Activated B cell treated with CpG ODN at 0.5 μM for 24 hours (primary cell): ENCODE measurements at regions of chr19 and their contacts with region 1.

Region 1: DNA sequence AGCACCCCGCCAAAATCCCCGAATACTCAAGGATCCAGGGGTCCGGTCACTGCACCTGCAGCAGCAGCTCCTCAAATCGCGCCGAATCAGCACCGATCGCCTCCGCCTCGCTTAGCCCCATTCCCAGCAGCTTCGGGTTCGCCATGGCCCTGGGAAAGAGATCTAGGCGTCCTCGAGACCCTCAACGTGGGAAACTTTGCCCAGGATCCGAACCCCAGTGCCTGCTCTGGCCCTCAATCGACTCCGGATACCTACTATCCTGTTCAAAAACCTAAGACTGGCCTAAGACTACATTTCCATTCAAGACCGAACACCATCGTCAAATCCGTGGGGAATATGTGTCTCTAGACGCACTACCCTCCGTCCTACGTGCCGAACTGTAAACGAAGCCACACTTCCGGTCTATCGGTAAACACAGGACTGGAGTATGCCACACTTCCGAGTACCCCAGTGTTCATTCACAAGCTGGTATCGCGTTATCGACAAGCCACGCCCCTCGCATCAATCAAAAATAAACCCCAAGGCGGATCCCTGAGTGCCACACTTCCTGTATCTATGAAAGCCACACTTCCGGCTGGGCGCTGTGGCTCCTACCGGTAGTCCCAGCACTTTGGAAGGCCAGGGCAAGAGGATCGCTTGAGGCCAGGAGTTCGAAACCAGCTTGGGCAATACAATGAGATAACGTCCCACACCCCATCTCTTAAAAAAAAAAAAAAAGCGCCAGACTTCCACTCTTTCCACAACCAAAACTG is at the start of gene PIH1D1:
- DNase-seq: peak; percentile 79
- ATAC-seq: peak; percentile 60
- H3K4me3 Mint-ChIP-seq: peak within 1 kb of the TSS; percentile 99
- H3K27ac Mint-ChIP-seq: peak within 1 kb of the TSS; percentile 100
- H3K4me1 Mint-ChIP-seq: peaks cover 55% of the 10 kb centered on the region
- H3K27me3 Mint-ChIP-seq: no peaks in the 10 kb centered on the region
- CTCF ChIP-seq: no peak
- total RNA-seq, gene PIH1D1: 110 and 111 TPM in 2 replicates

Region 2: DNA sequence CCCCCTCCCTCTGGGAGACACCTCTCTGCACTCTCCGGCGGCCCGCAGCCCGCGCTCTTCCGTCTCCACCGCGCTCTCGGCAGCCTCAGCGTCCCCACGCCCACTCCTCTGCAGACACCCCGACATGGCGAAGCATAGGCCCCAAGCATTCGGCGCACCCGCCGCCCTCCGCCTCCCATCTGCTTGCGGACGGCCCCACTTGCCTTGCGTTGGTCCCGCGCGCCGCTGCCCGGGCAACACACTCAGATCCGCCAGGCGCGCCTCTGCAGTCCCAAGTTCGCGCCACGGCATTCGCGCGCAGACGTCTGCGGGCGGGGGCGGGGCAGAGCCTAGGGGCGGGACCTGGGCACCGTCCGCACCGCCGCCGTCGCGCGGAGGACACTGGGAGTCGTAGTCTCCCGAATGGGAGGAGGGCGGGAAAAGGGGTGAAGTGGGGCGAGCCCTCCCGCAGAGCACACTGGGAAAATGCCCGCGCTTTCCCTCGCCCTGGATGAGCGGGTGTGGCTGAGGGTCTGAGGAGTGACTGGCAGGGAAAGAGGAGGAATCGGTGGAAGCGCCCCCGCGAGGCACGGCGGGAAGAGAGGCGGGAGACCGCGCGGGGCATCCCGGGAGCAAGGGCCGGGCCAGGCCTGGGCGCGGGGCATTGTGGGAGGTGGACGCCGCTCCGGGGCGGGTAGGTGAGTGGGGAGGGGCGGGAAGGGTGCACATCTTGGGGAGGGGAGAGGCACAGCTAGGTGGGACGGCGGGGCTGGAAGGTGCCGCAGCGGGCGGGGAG is 1281.4 kb before region 1 on chr19 and contains the starts of genes LIG1 and ZSWIM9:
- CTCF ChIA-PET with region 1: no interaction called
- POLR2A ChIA-PET with region 1: interaction called, 10 read pairs
- intact Hi-C with region 1: no loop called
- DNase-seq: peak; percentile 93
- ATAC-seq: peak; percentile 83
- H3K4me3 Mint-ChIP-seq: peak within 1 kb of the TSS; percentile 100
- H3K27ac Mint-ChIP-seq: peak within 1 kb of the TSS; percentile 99
- H3K4me1 Mint-ChIP-seq: peaks cover 21% of the 10 kb centered on the region
- H3K27me3 Mint-ChIP-seq: no peaks in the 10 kb centered on the region
- CTCF ChIP-seq: no peak
- total RNA-seq, gene LIG1: 41.8 and 42.9 TPM in 2 replicates
- total RNA-seq, gene ZSWIM9: 5.7 and 8.6 TPM in 2 replicates

Region 3: GRCh38 chr19:48993175-48994034 is 458.2 kb before region 1 on chr19 and contains the starts of genes GYS1 and RUVBL2:
- CTCF ChIA-PET with region 1: no interaction called
- POLR2A ChIA-PET with region 1: interaction called, 8 read pairs
- intact Hi-C with region 1: loop called (anchors 1 kb)
- DNase-seq: peak; percentile 96
- ATAC-seq: peak; percentile 92
- H3K4me3 Mint-ChIP-seq: peak within 1 kb of the TSS; percentile 97
- H3K27ac Mint-ChIP-seq: peak within 1 kb of the TSS; percentile 97
- H3K4me1 Mint-ChIP-seq: peaks cover 33% of the 10 kb centered on the region
- H3K27me3 Mint-ChIP-seq: no peaks in the 10 kb centered on the region
- CTCF ChIP-seq: peak; percentile 94
- total RNA-seq, gene GYS1: 50.7 and 52.7 TPM in 2 replicates
- total RNA-seq, gene RUVBL2: 75.6 and 79.4 TPM in 2 replicates

Region 4: GRCh38 chr19:49282184-49282583 is 169.4 kb before region 1 on chr19:
- CTCF ChIA-PET with region 1: no interaction called
- POLR2A ChIA-PET with region 1: no interaction called
- intact Hi-C with region 1: no loop called
- DNase-seq: no peak
- ATAC-seq: no peak
- H3K4me3 Mint-ChIP-seq: no peak overlapping the region
- H3K27ac Mint-ChIP-seq: no peak overlapping the region
- H3K4me1 Mint-ChIP-seq: no peaks in the 10 kb centered on the region
- H3K27me3 Mint-ChIP-seq: peaks cover 10% of the 10 kb centered on the region
- CTCF ChIP-seq: no peak

Region 5: DNA sequence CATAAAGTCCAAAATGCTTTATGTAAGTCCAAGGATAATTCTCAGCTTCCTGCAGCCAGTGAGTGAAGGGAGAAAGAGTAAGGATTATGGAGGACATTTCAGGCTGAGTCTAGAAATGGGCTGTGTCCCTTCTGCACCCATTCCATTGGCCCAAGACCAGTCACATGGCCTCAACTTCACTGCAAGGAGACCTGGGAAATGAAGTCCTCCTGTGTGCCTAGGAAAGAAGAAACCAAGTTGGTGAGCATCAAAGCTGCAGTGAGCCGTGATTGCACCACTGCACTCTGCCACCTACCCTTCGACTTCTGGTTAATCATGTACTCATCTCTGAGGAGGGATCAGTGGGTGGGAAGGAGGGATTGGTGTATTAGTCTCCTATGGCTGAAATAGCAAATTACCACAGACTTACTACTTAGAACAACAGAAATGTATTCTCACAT is 120.0 kb before region 1 on chr19:
- CTCF ChIA-PET with region 1: no interaction called
- POLR2A ChIA-PET with region 1: interaction called, 20 read pairs
- intact Hi-C with region 1: loop called (anchors 5 kb)
- DNase-seq: no peak
- ATAC-seq: peak; percentile 44
- H3K4me3 Mint-ChIP-seq: peak overlapping the region; percentile 73
- H3K27ac Mint-ChIP-seq: peak overlapping the region; percentile 100
- H3K4me1 Mint-ChIP-seq: peaks cover 95% of the 10 kb centered on the region
- H3K27me3 Mint-ChIP-seq: no peaks in the 10 kb centered on the region
- CTCF ChIP-seq: no peak

Region 6: DNA sequence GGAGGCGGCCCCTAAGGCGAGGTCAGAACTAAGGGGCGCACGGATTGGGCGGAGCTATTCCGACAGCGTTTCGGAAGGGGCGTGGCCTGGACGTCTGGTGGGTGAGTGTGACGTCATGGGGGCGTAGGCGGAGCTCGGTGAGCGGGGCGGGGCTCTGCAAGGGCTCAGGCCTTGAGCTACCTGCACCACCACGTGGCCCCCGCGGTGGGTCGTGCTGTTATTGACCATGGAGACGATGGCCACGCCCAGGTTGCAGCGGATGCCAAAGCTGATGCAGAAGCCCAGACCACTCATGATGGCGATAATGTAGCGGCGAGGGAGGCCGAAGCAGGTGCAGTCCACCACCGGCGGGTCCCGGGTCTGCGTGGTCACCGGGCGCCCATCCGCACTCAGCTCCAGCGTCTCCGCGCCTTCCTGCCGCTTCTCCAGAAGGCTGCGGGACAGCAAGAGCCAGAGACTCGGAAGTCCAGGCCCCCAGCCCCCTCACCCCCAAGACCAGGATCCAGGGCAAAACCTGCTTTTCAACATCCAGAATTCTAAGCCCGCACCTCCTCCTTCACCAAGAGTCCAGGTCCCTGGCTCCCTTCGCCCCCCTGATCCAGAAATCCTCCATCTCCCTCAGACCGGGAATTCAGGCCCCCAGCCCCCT is 15.1 kb before region 1 on chr19:
- CTCF ChIA-PET with region 1: no interaction called
- POLR2A ChIA-PET with region 1: no interaction called
- intact Hi-C with region 1: no loop called
- DNase-seq: no peak
- ATAC-seq: peak; percentile 50
- H3K4me3 Mint-ChIP-seq: peak overlapping the region; percentile 7
- H3K27ac Mint-ChIP-seq: no peak overlapping the region
- H3K4me1 Mint-ChIP-seq: peaks cover 38% of the 10 kb centered on the region
- H3K27me3 Mint-ChIP-seq: peaks cover 82% of the 10 kb centered on the region
- CTCF ChIP-seq: no peak

Region 7: DNA sequence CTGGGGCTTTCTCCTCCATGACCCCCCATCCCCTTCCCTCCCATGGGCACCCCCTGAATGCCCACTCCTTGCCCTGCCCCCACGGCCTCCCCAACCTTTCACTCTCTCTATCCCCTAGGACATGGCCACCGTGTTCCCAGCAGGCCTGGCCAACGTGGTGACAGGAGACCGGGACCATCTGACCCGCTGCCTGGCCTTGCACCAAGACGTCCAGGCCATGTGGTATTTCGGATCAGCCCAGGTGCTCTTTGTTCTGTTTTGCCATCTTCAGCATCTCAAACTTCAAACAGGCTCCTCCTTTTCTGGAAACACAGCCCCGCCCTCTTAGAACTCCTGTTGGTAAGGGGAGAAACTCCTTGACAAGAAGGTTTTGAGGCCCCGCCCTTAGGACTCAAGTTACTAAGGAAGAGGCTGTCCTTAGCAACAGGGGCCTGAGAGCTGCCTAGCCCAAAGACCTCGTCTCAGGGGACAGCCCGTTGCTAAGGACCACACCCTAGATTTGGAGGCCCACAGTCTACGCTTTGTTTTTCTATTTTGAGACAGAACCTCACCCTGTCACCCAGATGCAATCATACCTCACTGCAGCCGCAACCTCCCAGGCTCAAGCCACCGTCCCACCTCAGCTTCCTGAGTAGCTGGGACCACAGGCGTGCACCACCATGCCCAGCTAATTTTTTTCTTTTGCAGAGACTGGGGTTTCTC is 17.3 kb after region 1 on chr19:
- CTCF ChIA-PET with region 1: interaction called, 14 read pairs
- POLR2A ChIA-PET with region 1: interaction called, 193 read pairs
- intact Hi-C with region 1: loop called (anchors 1 kb)
- DNase-seq: peak; percentile 72
- ATAC-seq: peak; percentile 76
- H3K4me3 Mint-ChIP-seq: peak overlapping the region; percentile 61
- H3K27ac Mint-ChIP-seq: peak overlapping the region; percentile 97
- H3K4me1 Mint-ChIP-seq: peaks cover 46% of the 10 kb centered on the region
- H3K27me3 Mint-ChIP-seq: no peaks in the 10 kb centered on the region
- CTCF ChIP-seq: no peak

Region 8: DNA sequence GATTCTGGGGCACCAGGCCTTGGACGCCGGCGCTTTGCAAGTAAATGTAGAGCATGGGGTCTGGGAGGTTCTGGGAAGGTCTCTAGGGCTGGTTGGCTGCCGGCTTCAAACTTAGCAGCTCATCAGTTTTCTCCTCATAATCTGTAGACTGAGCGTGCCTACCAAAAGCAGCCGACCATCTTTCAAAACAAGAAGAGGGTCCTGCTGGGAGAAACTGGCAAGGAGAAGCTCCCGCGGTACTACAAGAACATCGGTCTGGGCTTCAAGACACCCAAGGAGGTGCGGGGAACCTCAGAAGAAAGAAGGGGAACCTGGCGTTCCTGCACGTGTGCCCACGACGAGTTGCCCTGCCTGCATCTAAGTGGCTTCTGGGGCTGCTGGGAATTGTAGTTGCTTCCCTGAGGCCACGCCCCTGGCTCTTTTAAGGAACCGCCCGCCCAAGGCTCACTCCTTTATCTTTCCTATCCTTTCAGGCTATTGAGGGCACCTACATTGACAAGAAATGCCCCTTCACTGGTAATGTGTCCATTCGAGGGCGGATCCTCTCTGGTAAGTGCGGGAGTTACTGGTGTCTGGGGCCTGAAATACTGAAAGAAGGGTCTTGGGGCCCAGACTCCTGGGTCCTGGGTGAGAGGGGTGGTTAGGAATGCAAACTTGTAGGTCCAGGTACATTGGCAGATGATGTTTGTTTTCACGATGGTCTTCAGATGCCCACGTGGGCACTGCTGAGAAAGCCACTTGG is 45.6 kb after region 1 on chr19:
- CTCF ChIA-PET with region 1: no interaction called
- POLR2A ChIA-PET with region 1: interaction called, 77 read pairs
- intact Hi-C with region 1: loop called (anchors 1 kb)
- DNase-seq: peak; percentile 55
- ATAC-seq: peak; percentile 7
- H3K4me3 Mint-ChIP-seq: peak overlapping the region; percentile 93
- H3K27ac Mint-ChIP-seq: peak overlapping the region; percentile 97
- H3K4me1 Mint-ChIP-seq: peaks cover 68% of the 10 kb centered on the region
- H3K27me3 Mint-ChIP-seq: no peaks in the 10 kb centered on the region
- CTCF ChIP-seq: no peak

Region 9: DNA sequence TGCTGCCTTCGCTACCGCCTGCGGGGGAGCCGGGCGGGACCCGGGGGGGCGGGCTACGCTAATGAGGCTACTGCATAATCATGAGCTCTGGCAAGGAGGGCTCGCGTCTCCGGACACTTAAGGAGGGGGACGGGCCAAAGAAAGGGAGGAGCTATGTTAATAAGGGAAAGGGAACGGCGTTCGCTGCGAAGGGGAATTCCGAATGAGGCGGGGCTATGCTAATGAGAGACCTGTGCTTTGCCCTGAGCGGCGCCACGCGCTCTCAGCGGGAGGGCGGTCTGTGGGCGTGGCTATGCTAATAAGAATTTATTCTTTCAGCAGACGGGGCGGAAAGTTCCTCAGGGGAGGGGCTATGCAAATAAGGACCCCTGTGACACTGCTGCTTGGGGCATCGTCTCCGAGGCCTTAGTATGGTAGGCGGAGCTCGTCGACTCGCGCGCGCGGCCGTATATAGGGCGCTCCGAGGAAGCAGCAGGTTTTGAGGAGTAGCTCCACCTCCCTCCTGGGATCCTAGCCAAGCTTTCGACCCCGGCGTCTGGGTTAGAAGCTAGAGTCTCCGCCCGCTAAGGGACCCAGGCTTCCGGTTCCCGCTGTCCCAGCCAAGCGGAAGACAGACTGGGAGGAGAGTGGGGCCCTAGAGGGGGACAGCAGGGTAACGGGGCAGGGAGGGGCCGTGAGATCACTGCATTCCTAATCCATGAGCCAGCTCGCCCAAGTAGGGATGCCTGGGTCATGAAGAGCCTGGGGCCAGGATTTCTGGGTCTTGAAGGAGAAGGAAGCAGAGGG is 188.7 kb after region 1 on chr19 and contains the start of gene RRAS:
- CTCF ChIA-PET with region 1: no interaction called
- POLR2A ChIA-PET with region 1: interaction called, 4 read pairs
- intact Hi-C with region 1: loop called (anchors 1 kb)
- DNase-seq: peak; percentile 97
- ATAC-seq: peak; percentile 69
- H3K4me3 Mint-ChIP-seq: peak within 1 kb of the TSS; percentile 93
- H3K27ac Mint-ChIP-seq: peak within 1 kb of the TSS; percentile 96
- H3K4me1 Mint-ChIP-seq: peaks cover 59% of the 10 kb centered on the region
- H3K27me3 Mint-ChIP-seq: no peaks in the 10 kb centered on the region
- CTCF ChIP-seq: no peak
- total RNA-seq, gene RRAS: 4.8 and 5.1 TPM in 2 replicates